PC-9 (cell line): ENCODE measurements at regions of chr5 and their contacts with region 1.

Region 1: GRCh38 chr5:168359832-168360460 is 68.5 kb downstream of the WWC1 start:
- DNase-seq: peak; percentile 83 to 99
- H3K4me3 ChIP-seq: no peak overlapping the region
- H3K27ac ChIP-seq: peak overlapping the region; percentile 97
- H3K4me1 ChIP-seq: peaks cover 90% of the 10 kb centered on the region
- H3K27me3 ChIP-seq: no peaks in the 10 kb centered on the region
- CTCF ChIP-seq: no peak

Region 2: DNA sequence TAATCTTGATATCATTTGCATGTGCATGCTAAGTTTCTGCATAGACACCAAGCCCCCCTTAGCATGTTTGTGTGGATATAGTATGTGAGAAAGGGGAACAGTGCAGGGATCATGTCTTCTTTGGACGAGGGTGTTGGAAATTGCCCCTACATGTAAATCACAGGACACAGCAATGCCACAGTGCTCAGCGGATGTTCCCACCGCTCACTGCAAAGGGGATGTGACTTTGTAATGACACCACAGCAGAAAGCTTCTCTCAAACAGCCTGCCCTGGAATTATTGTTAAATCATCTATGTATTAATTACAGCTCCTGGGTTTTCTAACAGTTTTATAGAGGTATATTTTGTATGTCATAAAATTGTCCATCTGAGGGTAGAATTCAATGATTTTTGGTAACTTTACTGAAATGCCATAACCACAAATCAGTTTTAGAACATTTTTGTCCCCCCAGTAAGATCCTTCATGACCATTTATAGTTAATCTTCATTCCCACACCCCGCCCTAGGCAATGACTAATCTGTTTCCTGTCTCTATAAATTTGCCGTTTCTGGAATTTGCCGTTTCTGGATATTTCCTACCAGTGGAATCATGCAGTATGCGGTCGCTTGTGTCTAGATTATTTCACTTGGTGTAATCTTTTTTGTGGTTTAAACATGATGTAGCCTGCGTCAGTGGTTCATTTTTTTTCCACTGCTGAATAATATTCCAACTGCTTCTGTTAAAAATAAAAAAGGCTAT is 717.0 kb before region 1 on chr5:
- CTCF ChIA-PET with region 1: no interaction called
- POLR2A ChIA-PET with region 1: no interaction called
- intact Hi-C with region 1: no loop called
- DNase-seq: no peak
- H3K4me3 ChIP-seq: no peak overlapping the region
- H3K27ac ChIP-seq: peak overlapping the region; percentile 33; the same call in 1 of the 2 replicates
- H3K4me1 ChIP-seq: peaks cover 11% of the 10 kb centered on the region
- H3K27me3 ChIP-seq: no peaks in the 10 kb centered on the region
- CTCF ChIP-seq: no peak

Region 3: DNA sequence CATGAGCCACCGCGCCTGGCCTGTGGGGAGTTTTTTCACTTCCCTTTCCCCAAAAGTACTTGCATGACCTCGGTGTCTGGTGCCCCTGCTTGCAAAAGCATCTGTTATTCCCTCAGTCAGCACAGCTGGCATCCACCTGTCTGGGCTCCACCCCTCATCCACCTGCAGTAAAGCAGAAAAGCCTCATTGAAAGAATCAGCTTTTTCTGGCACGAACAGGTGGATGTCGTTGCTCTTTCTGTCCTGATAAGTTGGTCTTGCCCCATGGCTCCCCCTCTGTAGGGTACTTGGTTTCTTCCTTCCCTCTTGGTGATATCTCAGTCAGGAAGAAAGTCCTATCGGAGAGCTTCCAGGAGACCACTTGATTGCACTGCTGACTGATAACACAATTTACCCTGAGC is 31.1 kb before region 1 on chr5:
- CTCF ChIA-PET with region 1: interaction called, 9 read pairs
- POLR2A ChIA-PET with region 1: interaction called, 12 read pairs
- intact Hi-C with region 1: loop called (anchors 1 kb)
- DNase-seq: peak in 1 of 2 experiments; percentile 65
- H3K4me3 ChIP-seq: peak overlapping the region; percentile 39; the same call in 1 of the 2 replicates
- H3K27ac ChIP-seq: peak overlapping the region; percentile 78
- H3K4me1 ChIP-seq: peaks cover 99% of the 10 kb centered on the region
- H3K27me3 ChIP-seq: no peaks in the 10 kb centered on the region
- CTCF ChIP-seq: no peak

Region 4: GRCh38 chr5:168334695-168335094 is 25.3 kb before region 1 on chr5:
- CTCF ChIA-PET with region 1: interaction called, 4 read pairs
- POLR2A ChIA-PET with region 1: interaction called, 7 read pairs
- intact Hi-C with region 1: loop called (anchors 1 kb)
- DNase-seq: peak; percentile 92 to 96
- H3K4me3 ChIP-seq: no peak overlapping the region
- H3K27ac ChIP-seq: peak overlapping the region; percentile 62
- H3K4me1 ChIP-seq: peaks cover 75% of the 10 kb centered on the region
- H3K27me3 ChIP-seq: no peaks in the 10 kb centered on the region
- CTCF ChIP-seq: no peak

Region 5: DNA sequence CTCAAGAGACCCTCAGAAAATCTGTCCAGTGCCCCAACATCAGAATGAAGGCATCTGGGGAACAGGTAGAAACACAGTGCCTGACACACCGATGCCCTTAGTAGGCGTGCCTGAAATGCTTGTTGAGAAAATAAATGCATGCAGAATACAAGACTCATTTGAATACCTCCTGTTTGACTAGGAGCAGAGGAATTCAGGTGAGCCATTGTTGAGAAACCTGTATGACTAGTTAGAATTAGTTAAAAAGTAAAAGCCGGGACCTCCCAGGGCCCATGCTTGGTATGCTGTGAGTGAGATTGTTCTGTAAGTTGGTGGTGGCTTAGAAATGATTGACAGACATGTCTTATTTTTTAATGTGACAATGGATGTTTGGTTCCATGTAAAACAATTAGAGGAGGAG is 13.5 kb before region 1 on chr5:
- CTCF ChIA-PET with region 1: interaction called, 6 read pairs
- POLR2A ChIA-PET with region 1: interaction called, 11 read pairs
- intact Hi-C with region 1: loop called (anchors 1 kb)
- DNase-seq: peak; percentile 68 to 96
- H3K4me3 ChIP-seq: peak overlapping the region; percentile 27; the same call in 1 of the 2 replicates
- H3K27ac ChIP-seq: peak overlapping the region; percentile 71
- H3K4me1 ChIP-seq: peaks cover 83% of the 10 kb centered on the region
- H3K27me3 ChIP-seq: no peaks in the 10 kb centered on the region
- CTCF ChIP-seq: no peak

Region 6: DNA sequence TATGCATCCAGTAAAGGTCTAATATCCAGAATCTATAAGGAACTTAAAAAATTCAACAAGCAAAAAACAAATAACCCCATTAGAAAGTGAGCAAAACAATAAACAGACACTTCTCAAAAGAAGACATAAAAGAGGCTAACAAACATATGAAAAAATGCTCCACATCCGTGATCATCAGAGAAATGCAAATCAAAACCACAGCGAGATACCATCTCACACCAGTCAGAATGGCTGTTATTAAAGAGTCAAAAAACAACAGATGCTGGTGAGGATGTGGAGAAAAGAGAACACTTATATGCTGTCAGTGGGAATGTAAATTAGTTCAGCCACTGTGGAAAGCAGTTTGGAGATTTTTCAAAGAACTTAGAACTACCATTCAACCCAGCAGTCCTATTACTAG is 17.6 kb after region 1 on chr5:
- CTCF ChIA-PET with region 1: no interaction called
- POLR2A ChIA-PET with region 1: interaction called, 17 read pairs
- intact Hi-C with region 1: no loop called
- DNase-seq: no peak
- H3K4me3 ChIP-seq: no peak overlapping the region
- H3K27ac ChIP-seq: no peak overlapping the region
- H3K4me1 ChIP-seq: no peaks in the 10 kb centered on the region
- H3K27me3 ChIP-seq: no peaks in the 10 kb centered on the region
- CTCF ChIP-seq: no peak

Region 7: DNA sequence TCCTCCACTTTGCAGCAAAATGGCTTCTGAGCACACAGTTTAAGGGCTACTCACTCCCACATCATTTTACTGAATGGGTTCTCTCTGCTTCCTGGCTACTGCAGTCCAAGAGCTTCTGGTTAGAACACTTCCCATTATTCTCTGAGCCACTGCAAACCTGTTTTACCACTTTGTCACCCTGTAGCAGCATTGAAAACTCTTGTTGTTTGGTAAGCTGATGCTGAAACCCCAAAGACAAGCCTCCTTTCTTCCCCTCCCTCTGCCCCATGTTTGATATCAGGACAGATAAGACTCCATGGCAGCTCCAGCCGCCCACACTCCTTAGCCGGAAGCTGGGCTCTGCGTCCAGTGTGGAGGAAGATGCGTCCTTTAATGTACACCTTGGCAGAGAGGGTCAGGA is 42.0 kb after region 1 on chr5:
- CTCF ChIA-PET with region 1: interaction called, 5 read pairs
- POLR2A ChIA-PET with region 1: interaction called, 3 read pairs
- intact Hi-C with region 1: loop called (anchors 1 kb)
- DNase-seq: peak; percentile 79 to 97
- H3K4me3 ChIP-seq: no peak overlapping the region
- H3K27ac ChIP-seq: peak overlapping the region; percentile 90
- H3K4me1 ChIP-seq: peaks cover 44% of the 10 kb centered on the region
- H3K27me3 ChIP-seq: no peaks in the 10 kb centered on the region
- CTCF ChIP-seq: no peak